ENCODE measurements at regions of chr17 and their contacts with region 1.

Region 1: DNA sequence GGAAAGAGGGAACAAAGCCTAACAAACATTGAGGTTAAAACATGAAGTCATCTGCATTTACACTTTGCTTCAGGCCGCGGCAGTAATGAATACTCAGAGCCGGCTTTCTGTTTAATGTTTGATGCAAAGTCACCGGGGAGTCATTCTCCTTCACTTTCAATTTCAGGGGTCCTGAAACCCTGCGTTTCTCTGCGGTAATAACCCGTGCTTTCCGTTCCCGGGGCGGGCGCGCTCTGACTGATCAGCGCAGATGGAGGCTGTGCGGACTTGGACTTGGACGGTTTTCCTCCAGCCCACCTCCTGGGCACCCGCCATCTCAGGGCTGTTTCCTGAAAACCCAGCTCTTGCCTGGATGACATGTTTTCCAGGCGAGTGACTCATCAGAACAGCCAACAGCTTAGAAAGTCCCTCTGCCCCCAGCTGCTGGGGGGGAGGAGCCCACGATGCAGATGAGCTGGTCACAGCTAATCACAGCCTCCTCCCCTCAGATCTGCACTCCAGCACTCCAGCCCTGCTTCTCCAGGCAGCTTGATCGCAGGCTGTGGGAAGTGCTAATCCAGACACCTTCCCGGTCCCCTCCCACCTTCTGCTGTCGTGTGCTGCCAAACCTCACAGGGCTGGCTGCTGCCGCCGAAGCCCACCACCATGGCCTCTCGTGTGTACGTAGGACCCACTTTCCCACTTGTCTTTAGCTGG is 158.6 kb upstream of the CHMP6 start:
- DNase-seq: peak; percentile 87
- H3K4me3 Mint-ChIP-seq: peak overlapping the region; percentile 73
- H3K27ac Mint-ChIP-seq: peak overlapping the region; percentile 97
- H3K4me1 Mint-ChIP-seq: peaks cover 76% of the 10 kb centered on the region
- H3K27me3 Mint-ChIP-seq: no peaks in the 10 kb centered on the region

Region 2: GRCh38 chr17:80847496-80848230 is 14.6 kb after region 1 on chr17:
- CTCF ChIA-PET with region 1: interaction called, 10 read pairs
- POLR2A ChIA-PET with region 1: interaction called, 4 read pairs
- DNase-seq: peak; percentile 87
- H3K4me3 Mint-ChIP-seq: peak overlapping the region; percentile 12
- H3K27ac Mint-ChIP-seq: peak overlapping the region; percentile 94
- H3K4me1 Mint-ChIP-seq: peaks cover 88% of the 10 kb centered on the region
- H3K27me3 Mint-ChIP-seq: no peaks in the 10 kb centered on the region